ENCODE measurements at regions of chr16 and their contacts with region 1.

Region 1: GRCh38 chr16:1964506-1965395 is at the start of gene RPS2:
- DNase-seq: peak; percentile 95
- ATAC-seq: peak; percentile 93
- H3K4me3 Mint-ChIP-seq: peak within 1 kb of the TSS; percentile 92
- H3K27ac Mint-ChIP-seq: peak within 1 kb of the TSS; percentile 94
- H3K4me1 Mint-ChIP-seq: peaks cover 50% of the 10 kb centered on the region
- H3K27me3 Mint-ChIP-seq: no peaks in the 10 kb centered on the region
- CTCF ChIP-seq: no peak
- total RNA-seq, gene RPS2: 5,116 and 5,913 TPM in 2 replicates

Region 2: GRCh38 chr16:1691276-1691675 is 273.5 kb before region 1 on chr16:
- CTCF ChIA-PET with region 1: no interaction called
- POLR2A ChIA-PET with region 1: no interaction called
- intact Hi-C with region 1: no loop called
- DNase-seq: no peak
- ATAC-seq: no peak
- H3K4me3 Mint-ChIP-seq: no peak overlapping the region
- H3K27ac Mint-ChIP-seq: no peak overlapping the region
- H3K4me1 Mint-ChIP-seq: no peaks in the 10 kb centered on the region
- H3K27me3 Mint-ChIP-seq: no peaks in the 10 kb centered on the region
- CTCF ChIP-seq: no peak

Region 3: DNA sequence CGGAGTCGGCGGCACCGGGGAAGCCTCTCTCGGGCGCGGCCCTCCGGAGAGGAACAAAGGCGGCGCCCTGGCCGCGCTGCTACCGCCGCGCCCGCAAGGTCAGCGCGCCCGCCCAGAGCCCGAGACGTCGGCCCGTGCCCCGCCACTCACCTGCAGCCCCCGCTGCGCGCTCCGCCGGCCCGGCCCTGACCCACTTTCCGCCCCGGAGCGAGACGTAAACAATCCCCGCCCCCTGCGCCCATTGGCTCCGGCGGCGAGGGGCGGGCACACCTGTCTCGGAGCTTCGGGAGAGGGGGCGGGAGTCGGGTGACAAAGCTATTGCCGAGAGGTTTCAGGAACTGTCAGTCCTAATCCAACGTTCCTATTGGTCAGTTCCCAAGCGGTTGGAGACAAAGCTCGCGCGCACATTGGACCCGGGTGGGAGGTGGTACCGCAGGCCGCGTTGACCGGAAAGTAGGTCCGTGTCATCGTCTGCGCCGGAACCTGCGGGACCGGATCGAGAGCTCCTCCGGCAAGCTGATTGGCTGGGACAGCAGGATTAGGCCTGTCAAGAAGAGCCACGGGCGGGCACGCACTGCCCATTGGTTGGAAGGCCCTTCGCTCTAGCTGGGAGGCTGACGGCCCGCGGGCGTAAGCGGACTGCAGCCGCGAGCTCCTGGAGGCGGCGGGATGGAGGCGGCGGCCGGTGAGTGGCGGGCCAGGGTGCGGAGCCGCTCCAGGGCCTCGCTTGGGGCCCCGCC is 182.2 kb before region 1 on chr16 and contains the starts of genes NUBP2 and SPSB3:
- CTCF ChIA-PET with region 1: no interaction called
- POLR2A ChIA-PET with region 1: interaction called, 12 read pairs
- intact Hi-C with region 1: no loop called
- DNase-seq: peak; percentile 91
- ATAC-seq: peak; percentile 88
- H3K4me3 Mint-ChIP-seq: peak within 1 kb of the TSS; percentile 89
- H3K27ac Mint-ChIP-seq: peak within 1 kb of the TSS; percentile 87
- H3K4me1 Mint-ChIP-seq: peaks cover 24% of the 10 kb centered on the region
- H3K27me3 Mint-ChIP-seq: no peaks in the 10 kb centered on the region
- CTCF ChIP-seq: no peak
- total RNA-seq, gene NUBP2: 53.7 and 54.2 TPM in 2 replicates
- total RNA-seq, gene SPSB3: 36.4 and 40.3 TPM in 2 replicates

Region 4: GRCh38 chr16:1983544-1984346 is 19.0 kb after region 1 on chr16 and contains the start of gene GFER:
- CTCF ChIA-PET with region 1: interaction called, 3 read pairs
- POLR2A ChIA-PET with region 1: interaction called, 351 read pairs
- intact Hi-C with region 1: loop called (anchors 1 kb)
- DNase-seq: peak; percentile 80
- ATAC-seq: peak; percentile 92
- H3K4me3 Mint-ChIP-seq: peak within 1 kb of the TSS; percentile 83
- H3K27ac Mint-ChIP-seq: peak within 1 kb of the TSS; percentile 35
- H3K4me1 Mint-ChIP-seq: peaks cover 27% of the 10 kb centered on the region
- H3K27me3 Mint-ChIP-seq: peaks cover 14% of the 10 kb centered on the region
- CTCF ChIP-seq: no peak
- total RNA-seq, gene GFER: 31.6 and 39.4 TPM in 2 replicates

Region 5: DNA sequence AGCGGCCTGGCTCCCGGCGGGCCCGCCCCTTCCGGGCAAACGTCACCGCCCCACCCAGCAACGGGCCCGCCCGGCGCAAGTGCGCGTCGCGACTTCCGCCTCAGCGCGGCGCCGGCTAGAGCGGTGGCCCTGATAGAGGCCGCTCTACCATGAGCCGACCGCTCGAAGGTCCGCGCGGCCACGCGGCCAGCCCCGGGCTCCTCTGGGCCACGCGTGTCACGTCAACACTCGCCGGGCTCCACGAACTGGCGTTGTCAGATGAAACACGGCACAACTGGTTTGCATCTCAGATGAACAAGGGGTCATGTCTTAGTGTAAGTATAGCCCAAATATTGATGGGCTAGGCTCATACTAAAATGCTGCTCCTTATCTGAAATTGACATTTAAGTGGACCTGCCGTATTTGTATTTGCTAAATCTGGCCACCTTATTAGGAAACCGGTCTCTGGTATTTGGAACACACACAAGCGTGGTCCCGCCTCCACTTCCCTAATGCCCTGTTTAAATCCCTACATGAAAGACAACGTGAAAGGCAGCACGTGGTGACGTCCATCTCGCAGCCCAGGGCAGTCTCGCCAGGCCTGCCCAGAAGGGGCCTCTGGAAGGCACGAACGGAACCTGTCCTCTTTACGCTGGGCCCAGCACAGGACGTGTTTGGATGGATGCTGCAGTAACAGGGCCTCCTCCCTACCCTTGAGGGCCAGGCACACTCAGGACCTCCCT is 45.2 kb after region 1 on chr16 and contains the start of gene ZNF598:
- CTCF ChIA-PET with region 1: no interaction called
- POLR2A ChIA-PET with region 1: interaction called, 13 read pairs
- intact Hi-C with region 1: loop called (anchors 2 kb)
- DNase-seq: peak; percentile 83
- ATAC-seq: peak; percentile 94
- H3K4me3 Mint-ChIP-seq: peak within 1 kb of the TSS; percentile 92
- H3K27ac Mint-ChIP-seq: peak within 1 kb of the TSS; percentile 90
- H3K4me1 Mint-ChIP-seq: peaks cover 41% of the 10 kb centered on the region
- H3K27me3 Mint-ChIP-seq: no peaks in the 10 kb centered on the region
- CTCF ChIP-seq: no peak
- total RNA-seq, gene ZNF598: 56.4 and 59.3 TPM in 2 replicates

Region 6: DNA sequence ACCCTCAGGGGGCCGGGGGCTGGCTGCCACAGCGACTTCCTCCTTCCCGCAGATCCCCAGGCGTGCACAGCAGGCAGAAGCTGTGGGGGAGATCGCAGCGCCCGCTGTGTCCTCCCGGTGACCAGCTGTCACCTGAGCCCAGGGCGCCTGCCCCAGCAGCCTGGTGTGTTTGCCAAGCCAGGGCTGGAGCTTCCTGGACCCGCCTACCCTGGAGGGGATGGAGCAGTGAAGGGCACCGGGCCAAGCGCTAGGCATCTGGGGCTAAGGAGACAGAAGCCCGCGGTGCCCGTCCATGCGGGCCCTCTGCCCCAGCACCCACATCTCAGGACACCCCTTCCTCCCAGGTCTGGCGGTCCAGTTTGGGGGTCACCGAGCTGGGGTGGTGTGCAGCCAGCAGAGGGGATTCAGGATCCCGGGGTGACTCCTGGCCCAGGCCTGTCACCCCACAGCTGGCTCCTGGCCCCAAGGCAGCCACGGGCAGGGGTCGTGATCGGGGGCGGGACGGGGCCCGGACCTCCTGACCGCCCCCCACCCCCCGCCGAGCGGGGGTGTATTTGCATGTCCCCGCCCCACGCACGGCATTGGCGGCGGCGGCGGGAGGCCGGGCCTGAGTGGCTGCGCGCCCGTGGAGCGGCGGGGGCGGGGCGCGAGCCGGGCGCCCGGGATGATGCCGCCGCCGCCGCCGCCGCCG is 183.4 kb after region 1 on chr16 and contains the start of gene RAB26:
- CTCF ChIA-PET with region 1: no interaction called
- POLR2A ChIA-PET with region 1: interaction called, 19 read pairs
- intact Hi-C with region 1: no loop called
- DNase-seq: peak; percentile 66
- ATAC-seq: peak; percentile 79
- H3K4me3 Mint-ChIP-seq: peak within 1 kb of the TSS; percentile 41
- H3K27ac Mint-ChIP-seq: no peak within 1 kb of the TSS
- H3K4me1 Mint-ChIP-seq: peaks cover 30% of the 10 kb centered on the region
- H3K27me3 Mint-ChIP-seq: no peaks in the 10 kb centered on the region
- CTCF ChIP-seq: no peak
- total RNA-seq, gene RAB26: 0.61 TPM in 1 of 2 replicates, not detected in the other

Region 7: DNA sequence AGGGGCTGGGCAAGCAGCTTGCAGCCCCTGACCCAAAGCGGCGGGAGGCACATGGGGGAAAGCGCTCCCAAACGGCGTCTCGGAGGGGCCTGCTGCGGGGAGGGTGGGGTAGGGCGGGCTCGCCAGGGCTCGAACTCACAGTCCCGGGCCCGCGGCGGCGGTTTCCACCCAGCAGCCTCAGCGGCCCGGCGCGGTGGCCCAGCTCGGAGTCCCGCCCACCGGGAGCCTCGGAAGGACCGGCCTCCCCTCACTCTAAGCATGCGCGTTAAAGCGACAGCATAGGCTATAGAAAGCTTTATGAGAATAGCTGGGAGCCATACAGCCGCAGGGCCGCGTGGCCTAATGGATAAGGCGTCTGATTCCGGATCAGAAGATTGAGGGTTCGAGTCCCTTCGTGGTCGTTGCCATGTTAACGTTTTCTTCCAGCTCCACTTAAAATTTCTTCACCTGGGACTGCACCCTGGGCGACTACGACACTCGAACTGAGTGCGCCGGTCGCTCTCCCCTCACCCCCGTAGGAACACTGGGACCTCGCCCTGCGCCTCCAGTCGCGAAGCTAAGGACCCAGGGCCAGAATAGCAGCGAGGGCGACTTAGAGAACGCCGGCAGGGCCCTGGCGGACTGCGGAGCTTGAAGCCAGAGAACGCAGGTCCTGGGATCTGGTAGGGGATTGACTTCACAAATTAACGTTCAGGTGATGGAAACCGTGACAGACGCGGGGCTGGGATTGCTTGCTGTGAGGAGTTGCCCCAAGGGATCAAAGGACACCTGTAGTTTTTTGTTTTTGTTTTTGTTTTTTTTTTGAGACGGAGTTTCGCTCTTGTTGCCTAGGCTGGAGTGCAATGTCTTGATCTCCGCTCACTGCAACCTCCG is 1185.8 kb after region 1 on chr16:
- CTCF ChIA-PET with region 1: no interaction called
- POLR2A ChIA-PET with region 1: no interaction called
- intact Hi-C with region 1: loop called (anchors 10 kb)
- DNase-seq: peak; percentile 95
- ATAC-seq: peak; percentile 87
- H3K4me3 Mint-ChIP-seq: peak overlapping the region; percentile 88
- H3K27ac Mint-ChIP-seq: peak overlapping the region; percentile 91
- H3K4me1 Mint-ChIP-seq: peaks cover 25% of the 10 kb centered on the region
- H3K27me3 Mint-ChIP-seq: no peaks in the 10 kb centered on the region
- CTCF ChIP-seq: no peak